GM10248 (cell line): ENCODE measurements at regions of chr3 and their contacts with region 1.

Region 1: DNA sequence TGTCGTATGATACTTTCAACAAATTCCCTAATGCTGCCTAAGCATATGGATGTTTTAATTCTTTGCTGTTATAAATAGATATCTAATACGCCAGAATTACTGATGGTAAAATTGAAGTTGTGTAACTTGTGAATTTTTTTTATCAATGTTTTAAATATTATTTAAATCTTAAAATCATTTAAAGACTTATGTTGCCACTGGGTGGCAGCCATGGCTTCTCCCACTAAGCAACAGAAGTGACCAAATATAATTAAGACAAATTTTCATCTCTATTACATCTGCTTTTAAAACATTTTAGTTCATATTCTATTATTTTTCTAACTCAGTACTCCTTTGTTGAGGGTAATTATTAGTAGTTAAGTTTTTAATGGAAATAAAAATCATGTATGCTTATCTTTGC is 8.1 kb upstream of the IL20RB start:
- DNase-seq: no peak
- CTCF ChIP-seq: no peak

Region 2: GRCh38 chr3:136559896-136560295 is 389.8 kb before region 1 on chr3:
- CTCF ChIA-PET with region 1: no interaction called
- POLR2A ChIA-PET with region 1: no interaction called
- DNase-seq: no peak
- CTCF ChIP-seq: no peak

Region 3: GRCh38 chr3:136960836-136961518 is 11.3 kb after region 1 on chr3:
- CTCF ChIA-PET with region 1: interaction called, 16 read pairs
- POLR2A ChIA-PET with region 1: no interaction called
- DNase-seq: no peak
- CTCF ChIP-seq: no peak

Region 4: DNA sequence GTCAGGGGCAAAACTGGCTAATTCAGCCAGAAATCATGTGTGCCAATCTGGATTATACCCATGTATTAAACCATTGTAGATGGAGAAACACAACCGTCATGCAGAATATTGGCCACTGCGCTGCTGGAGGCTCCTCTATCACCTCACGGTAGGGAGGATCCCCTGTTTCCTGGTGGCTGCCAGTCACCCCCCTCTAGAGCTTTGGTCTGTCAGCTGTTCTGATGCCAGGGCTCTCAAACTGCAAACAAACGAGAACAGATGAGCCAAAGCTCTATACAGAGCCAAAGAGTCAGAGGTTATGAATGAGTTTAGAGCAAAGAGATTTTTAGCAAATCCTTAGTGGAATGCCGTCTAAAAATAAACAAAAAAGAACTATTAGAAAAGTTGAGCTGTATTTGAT is 70.6 kb after region 1 on chr3:
- CTCF ChIA-PET with region 1: no interaction called
- POLR2A ChIA-PET with region 1: no interaction called
- DNase-seq: no peak
- CTCF ChIP-seq: no peak

Region 5: GRCh38 chr3:137294139-137294538 is 344.4 kb after region 1 on chr3:
- CTCF ChIA-PET with region 1: no interaction called
- POLR2A ChIA-PET with region 1: no interaction called
- DNase-seq: no peak
- CTCF ChIP-seq: no peak